ENCODE measurements at regions of chr2 and their contacts with region 1.

Region 1: DNA sequence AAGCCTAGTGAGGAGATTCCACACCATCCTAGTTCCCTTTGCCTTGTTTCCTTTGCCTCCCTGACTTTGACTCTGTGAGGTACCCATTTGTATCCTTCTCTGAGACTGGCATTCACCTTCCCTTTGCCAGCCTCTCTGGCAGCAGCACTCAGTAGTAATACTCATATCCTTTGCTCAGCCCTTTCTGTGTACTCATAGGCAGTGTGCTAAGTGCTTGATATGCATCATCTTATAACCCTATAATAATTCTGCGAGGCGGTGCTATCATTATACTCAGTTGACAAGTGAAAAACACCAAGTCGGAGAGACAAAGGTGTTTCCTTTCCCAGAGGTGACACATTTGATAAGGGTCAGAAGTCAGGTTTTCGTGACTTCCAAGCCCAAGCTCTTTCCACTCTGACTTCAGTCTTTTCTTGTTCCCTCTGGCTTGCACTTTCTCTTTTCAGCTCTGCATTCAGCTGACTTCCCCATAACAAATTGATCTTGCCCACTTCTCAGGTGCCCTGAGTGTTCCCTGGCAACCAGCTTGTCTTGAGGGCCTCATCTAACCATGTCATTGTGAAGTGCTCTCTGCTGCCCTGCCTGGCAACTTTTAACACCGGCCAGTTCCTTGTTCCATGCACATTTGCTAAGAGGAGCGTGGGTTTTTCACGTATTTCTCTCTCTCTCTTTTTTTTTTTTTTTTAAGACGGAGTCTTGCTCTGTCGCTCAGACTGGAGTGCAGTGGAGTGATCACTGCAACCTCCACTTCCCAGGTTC is 94.5 kb upstream of the UPP2 start:
- DNase-seq: no peak
- H3K4me3 ChIP-seq: no peak overlapping the region
- H3K27ac ChIP-seq: no peak overlapping the region
- H3K4me1 ChIP-seq: peaks cover 17% of the 10 kb centered on the region
- H3K27me3 ChIP-seq: no peaks in the 10 kb centered on the region
- CTCF ChIP-seq: peak in 1 of 3 experiments; percentile 9

Region 2: DNA sequence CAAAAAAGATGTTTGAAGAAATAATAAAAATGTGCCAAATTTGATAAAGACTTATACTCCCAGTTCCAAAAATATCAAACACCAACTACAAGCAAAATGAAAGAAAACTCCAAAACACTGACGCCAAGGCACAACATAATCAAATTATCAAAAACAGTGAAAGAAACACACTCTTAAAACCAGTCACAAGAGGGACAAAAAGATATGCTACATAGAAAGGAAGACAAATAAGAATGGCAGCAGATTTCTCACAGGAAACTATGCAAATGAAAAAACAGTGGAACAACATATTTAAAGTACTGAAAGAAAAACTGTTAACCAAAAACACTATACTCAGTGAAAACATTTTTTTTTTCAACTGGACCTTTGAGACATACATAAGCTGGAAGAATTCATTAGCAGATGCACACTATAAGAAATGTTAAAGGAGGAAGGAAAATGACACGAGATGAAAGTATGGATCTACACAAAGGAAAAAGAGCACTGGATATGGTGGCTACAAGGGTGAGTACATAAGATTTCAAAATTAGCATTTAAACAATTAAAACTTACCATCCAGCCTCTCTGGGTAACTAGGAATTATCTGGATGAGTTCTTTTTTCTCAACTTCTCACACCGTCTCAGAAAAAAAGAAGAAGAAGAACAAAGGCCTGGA is 284.4 kb before region 1 on chr2:
- dilution Hi-C with region 1: no loop called
- DNase-seq: no peak
- H3K4me3 ChIP-seq: no peak overlapping the region
- H3K27ac ChIP-seq: no peak overlapping the region
- H3K4me1 ChIP-seq: no peaks in the 10 kb centered on the region
- H3K27me3 ChIP-seq: no peaks in the 10 kb centered on the region
- CTCF ChIP-seq: no peak

Region 3: DNA sequence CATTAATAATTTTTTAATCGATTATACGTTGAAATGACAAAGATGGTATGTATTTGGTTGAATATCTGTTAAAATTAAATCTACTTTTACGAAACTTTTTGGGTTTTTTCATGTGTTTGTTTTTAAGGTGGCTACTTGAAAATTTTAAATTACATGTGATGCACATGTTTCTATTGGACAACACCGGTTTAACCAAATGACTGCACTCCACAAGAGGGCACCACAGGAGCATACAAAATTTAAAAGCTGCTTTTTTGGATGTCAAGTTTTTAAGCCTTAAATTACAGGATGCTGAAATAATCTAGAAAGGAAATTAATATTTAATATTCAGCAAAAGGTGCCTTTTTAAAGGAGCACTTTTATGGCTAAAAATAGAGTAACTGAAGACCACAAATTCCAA is 229.7 kb before region 1 on chr2:
- dilution Hi-C with region 1: loop called (anchors 10 kb)
- DNase-seq: no peak
- H3K4me3 ChIP-seq: no peak overlapping the region
- H3K27ac ChIP-seq: no peak overlapping the region
- H3K4me1 ChIP-seq: peaks cover 2% of the 10 kb centered on the region
- H3K27me3 ChIP-seq: no peaks in the 10 kb centered on the region
- CTCF ChIP-seq: peak in 2 of 3 experiments; percentile 30 to 33